Activated CD4-positive, alpha-beta memory T cell treated with anti-CD3 and anti-CD28 coated beads for 36 hours (primary cell): ENCODE measurements at regions of chr22 and their contacts with region 1.

Region 1: DNA sequence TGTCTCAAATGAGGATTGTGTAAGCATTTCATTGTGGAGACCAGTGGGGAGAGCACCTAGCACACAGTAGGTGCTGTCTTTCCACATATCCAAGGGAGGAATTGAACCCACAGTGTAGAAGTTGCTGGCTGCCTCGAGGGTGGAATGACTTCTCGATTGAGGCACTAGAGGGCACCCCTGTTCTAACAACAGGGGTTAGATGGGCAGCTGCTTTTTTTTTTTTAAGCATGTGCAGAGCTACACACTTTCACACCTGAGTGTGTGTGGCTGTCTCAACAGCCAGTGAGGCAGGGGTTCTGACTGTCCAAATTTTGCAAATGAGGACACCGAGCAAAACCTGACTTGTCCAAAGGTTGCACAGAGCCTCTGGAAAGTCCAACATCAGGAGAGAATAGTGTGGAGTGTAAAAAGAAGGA is 118.2 kb upstream of the CRYBB3 start:
- DNase-seq: peak; percentile 72
- H3K4me3 Mint-ChIP-seq: no peak overlapping the region
- H3K27ac Mint-ChIP-seq: no peak overlapping the region
- H3K4me1 Mint-ChIP-seq: peaks cover 48% of the 10 kb centered on the region
- H3K27me3 Mint-ChIP-seq: no peaks in the 10 kb centered on the region

Region 2: DNA sequence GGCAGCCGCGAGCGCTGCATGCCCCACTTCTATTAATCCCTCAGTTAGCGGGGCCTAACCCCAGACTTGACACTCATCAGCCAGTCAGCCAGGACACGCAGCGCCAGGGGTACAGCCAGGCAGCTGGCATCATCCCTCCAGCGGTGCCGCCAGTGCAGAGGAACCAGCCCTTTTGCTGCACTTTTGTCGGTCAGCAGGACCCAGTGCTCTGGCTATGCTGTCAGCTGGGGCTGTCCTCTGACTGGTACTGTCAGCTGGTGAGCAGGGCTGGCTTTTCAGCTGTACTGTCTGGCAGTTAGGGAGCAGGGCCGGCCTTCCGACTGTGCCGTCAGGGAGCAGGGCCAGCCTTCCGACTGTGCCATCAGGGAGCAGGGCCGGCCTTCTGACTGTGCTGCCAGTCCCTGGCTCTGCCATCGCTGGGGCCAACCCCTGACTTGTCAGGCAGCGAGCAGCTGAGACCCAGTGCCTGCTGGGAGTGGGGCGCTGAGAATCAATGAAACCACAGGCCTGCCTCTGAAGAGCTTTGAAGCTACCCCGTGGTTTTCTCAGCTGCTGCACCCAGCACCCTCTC is 13.5 kb before region 1 on chr22:
- CTCF ChIA-PET with region 1: interaction called, 28 read pairs
- POLR2A ChIA-PET with region 1: interaction called, 6 read pairs
- intact Hi-C with region 1: loop called (anchors 1 kb)
- DNase-seq: peak; percentile 87
- H3K4me3 Mint-ChIP-seq: peak overlapping the region; percentile 81
- H3K27ac Mint-ChIP-seq: peak overlapping the region; percentile 87
- H3K4me1 Mint-ChIP-seq: peaks cover 71% of the 10 kb centered on the region
- H3K27me3 Mint-ChIP-seq: no peaks in the 10 kb centered on the region

Region 3: DNA sequence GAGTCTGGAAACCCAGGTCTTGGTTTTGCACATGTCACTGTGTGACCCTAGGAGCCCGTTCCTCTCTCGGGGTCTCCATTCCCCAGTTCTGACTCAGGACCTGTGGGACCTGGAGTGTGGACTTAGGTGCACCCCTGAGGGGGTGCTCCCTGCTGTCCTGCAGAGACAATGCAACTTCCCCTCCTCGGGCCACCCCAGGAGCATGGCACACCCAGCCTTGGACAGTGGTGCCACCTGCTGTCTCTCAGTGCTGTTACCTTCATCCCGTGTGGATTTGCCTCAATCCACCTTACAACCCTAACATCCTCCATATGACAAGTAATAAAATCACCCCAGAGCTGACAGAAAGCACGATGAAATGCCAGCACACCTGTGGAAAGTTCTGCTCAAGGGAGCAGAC is 90.7 kb after region 1 on chr22:
- CTCF ChIA-PET with region 1: interaction called, 36 read pairs
- POLR2A ChIA-PET with region 1: no interaction called
- intact Hi-C with region 1: loop called (anchors 5 kb)
- DNase-seq: peak; percentile 58
- H3K4me3 Mint-ChIP-seq: no peak overlapping the region
- H3K27ac Mint-ChIP-seq: no peak overlapping the region
- H3K4me1 Mint-ChIP-seq: no peaks in the 10 kb centered on the region
- H3K27me3 Mint-ChIP-seq: no peaks in the 10 kb centered on the region

Region 4: DNA sequence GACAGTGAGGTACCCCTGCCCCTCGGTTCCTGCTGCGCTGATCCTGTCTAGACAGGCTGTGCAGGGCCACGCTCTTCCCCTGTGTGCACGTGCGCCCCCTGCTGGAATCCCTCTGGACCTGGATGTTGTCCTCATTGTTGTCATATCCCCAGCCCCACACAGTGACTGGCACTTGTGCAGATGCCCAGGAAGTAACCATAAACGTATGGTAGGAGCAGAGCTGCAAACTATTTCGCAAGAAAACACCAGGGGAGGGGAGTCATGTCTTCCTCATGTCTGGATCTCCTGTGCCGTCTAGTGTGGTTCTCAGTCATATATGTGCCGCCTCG is 252.7 kb after region 1 on chr22:
- CTCF ChIA-PET with region 1: interaction called, 8 read pairs
- POLR2A ChIA-PET with region 1: no interaction called
- intact Hi-C with region 1: loop called (anchors 10 kb)
- DNase-seq: peak; percentile 74
- H3K4me3 Mint-ChIP-seq: no peak overlapping the region
- H3K27ac Mint-ChIP-seq: no peak overlapping the region
- H3K4me1 Mint-ChIP-seq: peaks cover 4% of the 10 kb centered on the region
- H3K27me3 Mint-ChIP-seq: peaks cover 2% of the 10 kb centered on the region

Region 5: DNA sequence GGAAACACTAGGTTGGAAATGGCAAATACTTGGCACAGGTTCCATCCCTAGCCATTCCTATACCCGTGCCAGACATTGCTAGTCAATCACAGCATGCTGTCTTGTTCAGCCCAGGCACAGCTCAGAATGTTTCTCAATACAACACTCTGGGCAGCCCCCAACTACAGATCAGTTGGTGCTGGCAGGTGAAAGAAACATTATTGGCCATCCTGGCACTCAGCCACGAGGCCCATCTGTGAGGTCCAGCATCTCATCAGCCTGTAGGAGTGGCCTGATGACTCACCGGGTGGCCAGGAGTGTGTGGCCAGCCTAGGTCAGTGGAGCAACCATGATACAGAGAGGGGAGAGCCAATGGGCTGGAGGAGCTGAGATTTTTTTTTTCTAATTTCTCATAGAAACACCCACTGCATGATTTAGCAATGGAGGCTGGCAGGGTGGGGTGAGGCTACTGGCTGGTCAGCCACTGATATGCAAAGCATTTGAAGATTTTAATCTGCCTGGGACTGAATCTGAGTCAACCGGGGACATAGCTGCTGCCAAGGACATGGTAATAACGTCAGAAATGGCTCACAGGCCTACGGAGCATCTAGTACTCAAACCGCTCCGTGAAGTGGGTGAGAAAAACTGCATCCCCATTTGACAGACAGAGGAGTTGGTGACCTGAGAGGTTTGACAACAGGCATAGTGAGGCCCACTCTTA is 666.0 kb after region 1 on chr22:
- CTCF ChIA-PET with region 1: no interaction called
- POLR2A ChIA-PET with region 1: no interaction called
- intact Hi-C with region 1: loop called (anchors 5 kb)
- DNase-seq: no peak
- H3K4me3 Mint-ChIP-seq: no peak overlapping the region
- H3K27ac Mint-ChIP-seq: no peak overlapping the region
- H3K4me1 Mint-ChIP-seq: peaks cover 50% of the 10 kb centered on the region
- H3K27me3 Mint-ChIP-seq: peaks cover 17% of the 10 kb centered on the region